ENCODE measurements at regions of chr1 and their contacts with region 1.

Region 1: GRCh38 chr1:48498096-48498791 is 26.2 kb upstream of the SPATA6 start:
- DNase-seq: peak; percentile 48
- H3K4me3 ChIP-seq: no peak overlapping the region
- H3K27ac ChIP-seq: no peak overlapping the region
- H3K27me3 ChIP-seq: no peaks in the 10 kb centered on the region
- CTCF ChIP-seq: peak; percentile 98

Region 2: GRCh38 chr1:48109390-48110013 is 388.7 kb before region 1 on chr1:
- CTCF ChIA-PET with region 1: interaction called, 27 read pairs
- POLR2A ChIA-PET with region 1: no interaction called
- DNase-seq: peak; percentile 18
- H3K4me3 ChIP-seq: no peak overlapping the region
- H3K27ac ChIP-seq: no peak overlapping the region
- H3K27me3 ChIP-seq: no peaks in the 10 kb centered on the region
- CTCF ChIP-seq: peak; percentile 96

Region 3: DNA sequence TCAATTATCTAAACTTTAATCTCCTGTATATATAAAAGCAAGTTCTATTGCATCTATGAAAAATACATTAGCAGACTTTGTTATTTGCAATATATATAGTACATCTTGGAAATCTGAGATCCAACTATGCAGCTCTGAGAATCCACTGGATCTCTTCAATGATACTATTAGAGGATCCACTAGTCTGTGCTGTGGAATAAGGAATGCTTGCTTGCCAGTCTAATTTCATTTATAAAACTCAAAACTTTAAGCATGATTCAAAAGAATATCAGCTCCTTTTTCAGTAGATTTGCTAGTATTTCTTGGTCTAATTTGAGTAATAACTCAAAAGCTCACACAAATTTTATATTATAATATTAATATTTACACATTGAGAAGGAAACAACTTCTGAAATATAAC is 141.3 kb before region 1 on chr1:
- CTCF ChIA-PET with region 1: interaction called, 21 read pairs
- POLR2A ChIA-PET with region 1: no interaction called
- DNase-seq: no peak
- H3K4me3 ChIP-seq: no peak overlapping the region
- H3K27ac ChIP-seq: no peak overlapping the region
- H3K27me3 ChIP-seq: no peaks in the 10 kb centered on the region
- CTCF ChIP-seq: 0 out of 2 replicates have a peak, but pooled peaks have one; percentile 13

Region 4: GRCh38 chr1:48450505-48450904 is 47.7 kb before region 1 on chr1:
- CTCF ChIA-PET with region 1: interaction called, 19 read pairs
- POLR2A ChIA-PET with region 1: no interaction called
- DNase-seq: no peak
- H3K4me3 ChIP-seq: no peak overlapping the region
- H3K27ac ChIP-seq: no peak overlapping the region
- H3K27me3 ChIP-seq: no peaks in the 10 kb centered on the region
- CTCF ChIP-seq: 0 out of 2 replicates have a peak, but pooled peaks have one; percentile 22

Region 5: GRCh38 chr1:48480504-48480903 is 17.7 kb before region 1 on chr1:
- CTCF ChIA-PET with region 1: interaction called, 12 read pairs
- POLR2A ChIA-PET with region 1: no interaction called
- DNase-seq: no peak
- H3K4me3 ChIP-seq: no peak overlapping the region
- H3K27ac ChIP-seq: no peak overlapping the region
- H3K27me3 ChIP-seq: no peaks in the 10 kb centered on the region
- CTCF ChIP-seq: no peak

Region 6: GRCh38 chr1:48916130-48917069 is 418.2 kb after region 1 on chr1:
- CTCF ChIA-PET with region 1: no interaction called
- POLR2A ChIA-PET with region 1: no interaction called
- DNase-seq: no peak
- H3K4me3 ChIP-seq: no peak overlapping the region
- H3K27ac ChIP-seq: no peak overlapping the region
- H3K27me3 ChIP-seq: no peaks in the 10 kb centered on the region
- CTCF ChIP-seq: peak; percentile 53